ENCODE measurements at regions of chr16 and their contacts with region 1.

Region 1: GRCh38 chr16:2486645-2487516 is 12.0 kb downstream of the TBC1D24 start:
- DNase-seq: peak; percentile 93
- ATAC-seq: peak; percentile 96
- H3K4me3 ChIP-seq: peak overlapping the region in 2 of 5 experiments; percentile 3 to 19
- H3K4me3 Mint-ChIP-seq: peak overlapping the region; percentile 78
- H3K27ac ChIP-seq: peak overlapping the region; percentile 53 to 64
- H3K27ac Mint-ChIP-seq: peak overlapping the region; percentile 90
- H3K4me1 ChIP-seq: peaks cover 24 to 26% of the 10 kb centered on the region in 2 donors
- H3K4me1 Mint-ChIP-seq: peaks cover 19% of the 10 kb centered on the region
- H3K27me3 ChIP-seq: no peaks in the 10 kb centered on the region
- H3K27me3 Mint-ChIP-seq: no peaks in the 10 kb centered on the region
- CTCF ChIP-seq: peak; percentile 59

Region 2: GRCh38 chr16:2047330-2048115 is 439.4 kb before region 1 on chr16 and contains the starts of genes NTHL1 and TSC2:
- CTCF ChIA-PET with region 1: no interaction called
- POLR2A ChIA-PET with region 1: interaction called, 10 read pairs
- intact Hi-C with region 1: no loop called
- DNase-seq: peak; percentile 95
- ATAC-seq: peak; percentile 97
- H3K4me3 ChIP-seq: peak within 1 kb of the TSS; percentile 27 to 79 (median 78)
- H3K4me3 Mint-ChIP-seq: peak within 1 kb of the TSS; percentile 91
- H3K27ac ChIP-seq: peak within 1 kb of the TSS in 1 of 2 donors; percentile 63
- H3K27ac Mint-ChIP-seq: peak within 1 kb of the TSS; percentile 76
- H3K4me1 ChIP-seq: peaks cover 17 to 35% of the 10 kb centered on the region in 2 donors
- H3K4me1 Mint-ChIP-seq: peaks cover 20% of the 10 kb centered on the region
- H3K27me3 ChIP-seq: no peaks in the 10 kb centered on the region
- H3K27me3 Mint-ChIP-seq: no peaks in the 10 kb centered on the region
- CTCF ChIP-seq: peak; percentile 26
- total RNA-seq, gene NTHL1: 14.1 and 17.5 TPM in 2 replicates
- total RNA-seq, gene TSC2: 188 and 194 TPM in 2 replicates

Region 3: GRCh38 chr16:2194852-2195321 is 292.0 kb before region 1 on chr16:
- CTCF ChIA-PET with region 1: interaction called, 28 read pairs
- POLR2A ChIA-PET with region 1: interaction called, 4 read pairs
- intact Hi-C with region 1: loop called (anchors 1 kb)
- DNase-seq: peak; percentile 77
- ATAC-seq: peak; percentile 73
- H3K4me3 ChIP-seq: peak overlapping the region in 1 of 5 experiments; percentile 44
- H3K4me3 Mint-ChIP-seq: peak overlapping the region; percentile 78
- H3K27ac ChIP-seq: no peak overlapping the region
- H3K27ac Mint-ChIP-seq: peak overlapping the region; percentile 37
- H3K4me1 ChIP-seq: peaks cover 12 to 22% of the 10 kb centered on the region in 2 donors
- H3K4me1 Mint-ChIP-seq: peaks cover 10% of the 10 kb centered on the region
- H3K27me3 ChIP-seq: peaks cover 0 to 50% (median 20%) of the 10 kb centered on the region in 4 experiments
- H3K27me3 Mint-ChIP-seq: peaks cover 28% of the 10 kb centered on the region
- CTCF ChIP-seq: peak; percentile 47

Region 4: GRCh38 chr16:2447920-2448583 is 38.8 kb before region 1 on chr16:
- CTCF ChIA-PET with region 1: no interaction called
- POLR2A ChIA-PET with region 1: no interaction called
- intact Hi-C with region 1: no loop called
- DNase-seq: no peak
- ATAC-seq: no peak
- H3K4me3 ChIP-seq: no peak overlapping the region
- H3K4me3 Mint-ChIP-seq: no peak overlapping the region
- H3K27ac ChIP-seq: no peak overlapping the region
- H3K27ac Mint-ChIP-seq: no peak overlapping the region
- H3K4me1 ChIP-seq: no peaks in the 10 kb centered on the region
- H3K4me1 Mint-ChIP-seq: no peaks in the 10 kb centered on the region
- H3K27me3 ChIP-seq: no peaks in the 10 kb centered on the region
- H3K27me3 Mint-ChIP-seq: no peaks in the 10 kb centered on the region
- CTCF ChIP-seq: no peak

Region 5: DNA sequence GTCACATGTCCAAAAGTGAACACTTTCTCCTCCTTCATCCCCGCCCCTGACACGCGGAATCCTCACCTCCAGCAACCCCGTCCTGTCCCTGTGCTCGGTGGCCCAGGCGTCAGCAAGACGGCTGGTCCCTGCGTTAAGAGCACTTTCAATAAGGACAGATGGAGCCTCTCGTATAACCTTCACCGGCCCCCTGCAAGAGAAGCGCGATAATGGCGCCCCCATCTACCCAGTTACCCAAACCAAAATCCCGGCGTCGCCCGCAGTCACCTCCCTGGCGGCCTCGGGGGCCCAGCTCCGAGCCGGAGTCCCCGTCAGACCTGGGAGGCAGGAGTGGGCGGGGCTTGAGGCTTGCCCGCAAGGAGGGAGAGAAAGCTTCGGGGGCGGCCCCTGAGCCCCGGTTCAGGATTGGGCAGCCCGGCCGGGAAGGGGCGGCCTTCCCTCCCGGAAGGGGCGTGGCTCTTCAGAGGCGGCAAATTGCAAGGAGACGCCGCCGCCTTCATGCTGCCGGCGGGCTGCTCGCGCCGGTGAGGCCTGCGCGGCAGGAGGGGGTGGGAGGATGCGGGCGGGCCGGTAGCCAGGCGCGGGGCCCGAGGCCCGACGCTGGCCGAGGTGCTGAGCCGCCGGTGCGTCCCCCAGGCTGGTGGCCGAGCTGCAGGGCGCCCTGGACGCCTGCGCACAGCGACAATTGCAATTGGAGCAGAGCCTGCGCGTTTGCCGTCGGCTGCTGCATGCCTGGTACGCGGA is 27.1 kb before region 1 on chr16 and contains the start of gene TEDC2:
- CTCF ChIA-PET with region 1: interaction called, 3 read pairs
- POLR2A ChIA-PET with region 1: interaction called, 3 read pairs
- intact Hi-C with region 1: loop called (anchors 1 kb)
- DNase-seq: peak; percentile 96
- ATAC-seq: peak; percentile 100
- H3K4me3 ChIP-seq: peak within 1 kb of the TSS; percentile 17 to 84 (median 54)
- H3K4me3 Mint-ChIP-seq: peak within 1 kb of the TSS; percentile 94
- H3K27ac ChIP-seq: peak within 1 kb of the TSS in 1 of 2 donors; percentile 34
- H3K27ac Mint-ChIP-seq: peak within 1 kb of the TSS; percentile 68
- H3K4me1 ChIP-seq: peaks cover 10 to 16% of the 10 kb centered on the region in 2 donors
- H3K4me1 Mint-ChIP-seq: peaks cover 6% of the 10 kb centered on the region
- H3K27me3 ChIP-seq: no peaks in the 10 kb centered on the region
- H3K27me3 Mint-ChIP-seq: no peaks in the 10 kb centered on the region
- CTCF ChIP-seq: no peak
- total RNA-seq, gene TEDC2: 1.5 and 2.9 TPM in 2 replicates

Region 6: GRCh38 chr16:2474877-2475412 is 11.9 kb before region 1 on chr16 and contains the start of gene TBC1D24:
- CTCF ChIA-PET with region 1: interaction called, 11 read pairs
- POLR2A ChIA-PET with region 1: no interaction called
- intact Hi-C with region 1: loop called (anchors 1 kb)
- DNase-seq: peak; percentile 88
- ATAC-seq: peak; percentile 76
- H3K4me3 ChIP-seq: peak within 1 kb of the TSS; percentile 26 to 77 (median 68)
- H3K4me3 Mint-ChIP-seq: peak within 1 kb of the TSS; percentile 79
- H3K27ac ChIP-seq: peak within 1 kb of the TSS in 1 of 2 donors; percentile 62
- H3K27ac Mint-ChIP-seq: peak within 1 kb of the TSS; percentile 53
- H3K4me1 ChIP-seq: peaks cover 42 to 44% of the 10 kb centered on the region in 2 donors
- H3K4me1 Mint-ChIP-seq: peaks cover 28% of the 10 kb centered on the region
- H3K27me3 ChIP-seq: peaks cover 0 to 30% (median 22%) of the 10 kb centered on the region in 4 experiments
- H3K27me3 Mint-ChIP-seq: peaks cover 13% of the 10 kb centered on the region
- CTCF ChIP-seq: no peak
- total RNA-seq, gene TBC1D24: 8.7 and 9.4 TPM in 2 replicates

Region 7: DNA sequence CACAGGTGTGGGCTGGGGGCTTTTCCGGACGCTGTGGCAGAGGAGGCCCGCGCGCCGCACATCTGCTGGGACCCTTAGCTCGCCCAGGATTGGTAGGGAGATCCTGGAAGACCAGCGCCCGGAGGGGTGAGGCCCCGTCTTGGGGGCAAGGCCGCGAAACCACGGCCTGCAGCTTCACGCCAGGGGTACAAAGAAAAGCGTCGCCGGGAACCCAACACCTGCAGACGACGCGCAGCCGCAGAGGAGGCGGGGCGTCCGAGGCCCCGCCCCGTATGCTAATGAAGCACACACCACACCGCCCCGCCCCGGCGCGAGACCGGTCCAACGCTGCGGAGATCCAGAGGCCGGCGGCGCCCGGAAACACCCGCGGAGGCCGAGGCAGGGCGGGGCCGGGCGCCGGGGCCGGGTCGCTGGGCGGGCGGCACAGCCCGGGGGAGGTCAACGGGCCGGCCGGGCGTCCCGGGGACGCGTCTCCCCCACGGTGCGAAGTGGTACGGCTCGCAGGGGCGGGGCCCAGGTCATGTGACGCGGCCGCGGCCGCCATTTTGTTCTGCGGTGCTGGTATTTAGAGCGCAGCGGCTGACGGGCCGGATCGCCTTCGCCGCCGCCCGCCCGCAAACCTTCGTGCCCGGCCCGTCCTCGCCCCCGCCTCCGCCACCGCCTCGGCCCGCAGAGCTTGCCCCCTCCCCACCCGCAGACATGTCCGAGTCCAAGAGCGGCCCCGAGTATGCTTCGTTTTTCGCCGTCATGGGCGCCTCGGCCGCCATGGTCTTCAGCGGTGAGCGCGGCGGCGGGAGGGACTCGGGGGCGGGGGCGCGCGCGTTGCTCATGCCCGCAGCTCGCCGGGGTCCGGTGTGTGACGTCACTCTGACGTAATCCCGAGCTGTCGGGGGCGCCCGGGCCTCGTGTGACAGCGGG is 26.8 kb after region 1 on chr16 and contains the start of gene ATP6V0C:
- CTCF ChIA-PET with region 1: no interaction called
- POLR2A ChIA-PET with region 1: no interaction called
- intact Hi-C with region 1: loop called (anchors 1 kb)
- DNase-seq: peak; percentile 98
- ATAC-seq: peak; percentile 80
- H3K4me3 ChIP-seq: peak within 1 kb of the TSS; percentile 75 to 96 (median 82)
- H3K4me3 Mint-ChIP-seq: peak within 1 kb of the TSS; percentile 96
- H3K27ac ChIP-seq: peak within 1 kb of the TSS; percentile 94 to 99
- H3K27ac Mint-ChIP-seq: peak within 1 kb of the TSS; percentile 99
- H3K4me1 ChIP-seq: peaks cover 79 to 88% of the 10 kb centered on the region in 2 donors
- H3K4me1 Mint-ChIP-seq: peaks cover 80% of the 10 kb centered on the region
- H3K27me3 ChIP-seq: no peaks in the 10 kb centered on the region
- H3K27me3 Mint-ChIP-seq: no peaks in the 10 kb centered on the region
- CTCF ChIP-seq: no peak
- total RNA-seq, gene ATP6V0C: 106 and 118 TPM in 2 replicates

Region 8: GRCh38 chr16:2799866-2800239 is 313.0 kb after region 1 on chr16:
- CTCF ChIA-PET with region 1: no interaction called
- POLR2A ChIA-PET with region 1: no interaction called
- intact Hi-C with region 1: no loop called
- DNase-seq: no peak
- ATAC-seq: no peak
- H3K4me3 ChIP-seq: no peak overlapping the region
- H3K4me3 Mint-ChIP-seq: no peak overlapping the region
- H3K27ac ChIP-seq: no peak overlapping the region
- H3K27ac Mint-ChIP-seq: no peak overlapping the region
- H3K4me1 ChIP-seq: no peaks in the 10 kb centered on the region
- H3K4me1 Mint-ChIP-seq: no peaks in the 10 kb centered on the region
- H3K27me3 ChIP-seq: peaks cover 0 to 6% (median 1%) of the 10 kb centered on the region in 4 experiments
- H3K27me3 Mint-ChIP-seq: peaks cover 9% of the 10 kb centered on the region
- CTCF ChIP-seq: no peak

Measured in B cell (primary cell).